ENCODE measurements at regions of chr1 and their contacts with region 1.

Region 1: DNA sequence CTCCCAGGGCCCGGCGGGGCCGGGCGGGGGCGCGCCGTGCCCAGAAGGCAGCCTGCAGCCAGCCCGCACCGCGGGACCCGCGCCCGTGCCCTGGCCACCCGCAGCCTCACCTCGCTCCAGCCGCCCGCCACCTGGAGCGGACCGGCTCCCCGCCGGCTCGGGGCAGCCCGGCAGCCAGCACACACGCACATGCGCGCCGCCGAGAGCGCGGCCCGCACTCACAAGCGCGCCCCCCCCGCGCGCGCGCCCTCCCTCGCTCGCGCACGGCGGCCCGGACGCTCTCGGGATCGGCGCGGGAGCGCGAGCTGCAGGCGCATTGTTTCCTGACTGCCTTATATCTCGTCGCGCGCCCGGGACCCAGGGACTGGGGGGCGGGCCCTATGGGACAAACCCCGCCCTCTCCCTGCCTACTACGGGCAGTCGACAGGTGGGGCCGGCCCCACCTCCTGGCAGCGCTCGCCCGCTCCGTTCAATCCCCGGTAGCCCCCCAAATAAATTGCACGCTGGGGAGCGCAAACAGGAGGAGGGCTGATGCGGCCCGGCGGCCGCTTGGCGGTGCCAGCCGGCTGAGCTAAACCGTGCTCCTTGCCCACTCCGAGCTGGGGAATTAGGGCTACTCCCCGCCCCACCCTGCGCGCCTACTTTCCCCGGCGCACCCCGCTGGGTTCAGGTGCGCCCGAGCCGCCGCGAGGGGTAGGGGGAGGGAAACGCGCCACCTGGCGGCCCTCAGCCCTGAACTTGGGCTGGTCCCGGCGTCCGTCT is at the start of gene MYCL:
- DNase-seq: peak; percentile 92
- H3K4me3 ChIP-seq: peak within 1 kb of the TSS; percentile 69 to 89 (median 78)
- H3K27ac ChIP-seq: no peak within 1 kb of the TSS
- H3K4me1 ChIP-seq: peaks cover 8% of the 10 kb centered on the region
- H3K27me3 ChIP-seq: peaks cover 2% of the 10 kb centered on the region
- CTCF ChIP-seq: peak; percentile 47 to 86
- total RNA-seq, gene MYCL: 3.1 to 4.5 TPM

Region 2: DNA sequence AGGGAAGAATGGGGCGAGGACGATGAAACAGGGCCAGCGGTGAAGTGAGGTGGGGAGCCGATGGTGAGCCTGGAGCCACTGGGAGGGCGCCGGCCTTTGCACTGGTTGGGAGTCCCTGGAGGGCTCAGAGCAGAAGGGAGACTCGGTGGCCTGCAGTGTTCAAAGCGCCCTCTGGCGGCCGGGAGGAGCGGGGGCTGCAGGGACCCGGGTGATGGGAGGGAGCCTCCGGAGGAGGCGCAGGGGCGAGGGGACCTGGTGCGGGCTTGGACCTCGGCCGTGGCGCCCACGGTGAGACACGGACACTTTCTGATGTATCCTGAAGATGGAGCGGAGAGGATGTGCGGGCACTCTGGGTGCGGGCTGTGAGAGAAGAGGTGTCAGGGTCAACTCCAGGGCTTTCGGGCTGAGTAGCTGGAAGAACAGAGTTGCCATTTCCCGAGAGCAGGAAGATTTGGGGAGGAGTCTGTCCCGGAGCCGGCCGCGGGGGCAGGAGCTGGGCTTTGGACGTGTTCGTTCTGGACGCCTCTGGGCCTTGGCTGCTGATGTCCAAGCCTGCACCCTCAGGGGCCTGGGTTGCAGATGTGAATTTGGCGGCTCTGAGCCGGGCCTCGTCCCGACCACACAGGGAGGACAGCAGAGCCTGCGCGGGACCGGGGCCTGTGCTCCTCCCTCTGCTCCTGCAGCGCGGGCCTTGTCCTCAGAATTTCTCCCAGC is 292.1 kb before region 1 on chr1:
- CTCF ChIA-PET with region 1: no interaction called
- dilution Hi-C with region 1: no loop called
- in situ Hi-C with region 1: no loop called
- intact Hi-C with region 1: loop called (anchors 1 kb)
- DNase-seq: peak; percentile 15
- H3K4me3 ChIP-seq: no peak overlapping the region
- H3K27ac ChIP-seq: no peak overlapping the region
- H3K4me1 ChIP-seq: peaks cover 4% of the 10 kb centered on the region
- H3K27me3 ChIP-seq: no peaks in the 10 kb centered on the region
- CTCF ChIP-seq: peak; percentile 59 to 64

Region 3: GRCh38 chr1:39825432-39825951 is 76.4 kb before region 1 on chr1:
- CTCF ChIA-PET with region 1: no interaction called
- dilution Hi-C with region 1: no loop called
- in situ Hi-C with region 1: loop called (anchors 10 to 25 kb)
- intact Hi-C with region 1: no loop called
- DNase-seq: no peak
- H3K4me3 ChIP-seq: no peak overlapping the region
- H3K27ac ChIP-seq: no peak overlapping the region
- H3K4me1 ChIP-seq: no peaks in the 10 kb centered on the region
- H3K27me3 ChIP-seq: no peaks in the 10 kb centered on the region
- CTCF ChIP-seq: no peak

Region 4: DNA sequence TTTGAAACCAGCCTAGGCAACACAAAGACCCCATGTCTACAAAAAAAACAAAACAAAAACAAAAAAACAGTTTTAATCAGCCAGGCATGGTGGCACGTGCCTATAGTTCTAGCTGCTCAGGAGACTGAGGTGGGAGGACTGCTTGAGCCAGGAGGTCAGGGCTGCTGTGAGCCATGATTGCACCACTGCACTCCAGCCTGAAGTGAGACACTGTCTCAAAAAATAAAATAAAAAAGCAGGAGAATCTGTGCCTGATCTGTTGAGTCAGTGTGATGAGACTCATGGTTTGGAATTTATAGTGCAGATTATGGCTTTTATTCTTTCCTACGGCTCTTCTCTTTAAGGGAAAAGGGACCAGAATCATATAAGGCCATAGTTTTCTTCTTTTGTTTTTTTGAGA is 35.1 kb before region 1 on chr1:
- CTCF ChIA-PET with region 1: no interaction called
- dilution Hi-C with region 1: no loop called
- in situ Hi-C with region 1: no loop called
- intact Hi-C with region 1: loop called (anchors 5 kb)
- DNase-seq: peak; percentile 57
- H3K4me3 ChIP-seq: no peak overlapping the region
- H3K27ac ChIP-seq: no peak overlapping the region
- H3K4me1 ChIP-seq: no peaks in the 10 kb centered on the region
- H3K27me3 ChIP-seq: no peaks in the 10 kb centered on the region
- CTCF ChIP-seq: no peak

Measured in mammary epithelial cell (primary cell).